ENCODE measurements at regions of chr19 and their contacts with region 1.

Region 1: DNA sequence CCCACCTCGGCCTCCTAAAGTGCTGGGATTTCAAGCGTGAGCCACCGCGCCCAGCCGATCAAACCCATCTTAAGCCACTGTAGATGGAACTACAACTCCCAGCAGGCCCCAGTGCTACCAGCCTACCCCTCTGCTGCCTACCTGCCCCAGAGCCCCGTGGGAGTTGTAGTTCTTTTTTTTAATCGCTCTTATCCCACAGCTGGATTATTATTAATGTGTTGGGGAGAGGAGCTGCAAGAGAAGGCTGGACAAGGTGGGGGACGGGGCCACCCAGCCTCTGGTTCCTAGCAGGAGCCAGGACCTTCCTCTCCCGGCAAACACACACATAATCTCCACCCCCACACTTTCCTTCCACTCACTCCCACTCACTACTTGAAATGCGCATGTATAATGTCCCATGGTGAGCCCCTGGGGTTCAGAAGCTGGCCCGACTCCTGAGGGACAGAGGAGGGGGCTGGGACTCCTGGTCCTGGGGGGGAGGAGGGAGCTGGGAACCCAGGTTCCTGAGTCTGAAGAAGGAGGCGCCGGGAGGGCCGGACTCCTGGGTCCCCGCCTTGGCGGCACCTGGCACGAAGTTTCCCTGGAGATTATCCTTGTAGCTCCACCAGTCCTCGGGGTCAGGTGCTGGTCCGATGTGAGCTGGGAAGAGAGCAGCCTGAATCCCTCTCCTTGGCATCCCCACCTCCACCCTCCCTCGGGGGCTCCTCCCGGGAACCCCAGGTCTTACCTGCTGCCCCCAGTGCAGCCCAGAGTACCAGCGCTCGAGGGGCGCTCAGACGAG is 958 bp downstream of the CA11 start:
- DNase-seq: peak in 1 of 2 donors; percentile 81
- H3K4me3 ChIP-seq: peak overlapping the region; percentile 50 to 68 (median 57)
- H3K27ac ChIP-seq: peak overlapping the region; percentile 87 to 93
- H3K4me1 ChIP-seq: peaks cover 0 to 4% of the 10 kb centered on the region in 2 donors
- H3K27me3 ChIP-seq: no peaks in the 10 kb centered on the region
- CTCF ChIP-seq: no peak
- POLR2A ChIP-seq: no peak

Region 2: DNA sequence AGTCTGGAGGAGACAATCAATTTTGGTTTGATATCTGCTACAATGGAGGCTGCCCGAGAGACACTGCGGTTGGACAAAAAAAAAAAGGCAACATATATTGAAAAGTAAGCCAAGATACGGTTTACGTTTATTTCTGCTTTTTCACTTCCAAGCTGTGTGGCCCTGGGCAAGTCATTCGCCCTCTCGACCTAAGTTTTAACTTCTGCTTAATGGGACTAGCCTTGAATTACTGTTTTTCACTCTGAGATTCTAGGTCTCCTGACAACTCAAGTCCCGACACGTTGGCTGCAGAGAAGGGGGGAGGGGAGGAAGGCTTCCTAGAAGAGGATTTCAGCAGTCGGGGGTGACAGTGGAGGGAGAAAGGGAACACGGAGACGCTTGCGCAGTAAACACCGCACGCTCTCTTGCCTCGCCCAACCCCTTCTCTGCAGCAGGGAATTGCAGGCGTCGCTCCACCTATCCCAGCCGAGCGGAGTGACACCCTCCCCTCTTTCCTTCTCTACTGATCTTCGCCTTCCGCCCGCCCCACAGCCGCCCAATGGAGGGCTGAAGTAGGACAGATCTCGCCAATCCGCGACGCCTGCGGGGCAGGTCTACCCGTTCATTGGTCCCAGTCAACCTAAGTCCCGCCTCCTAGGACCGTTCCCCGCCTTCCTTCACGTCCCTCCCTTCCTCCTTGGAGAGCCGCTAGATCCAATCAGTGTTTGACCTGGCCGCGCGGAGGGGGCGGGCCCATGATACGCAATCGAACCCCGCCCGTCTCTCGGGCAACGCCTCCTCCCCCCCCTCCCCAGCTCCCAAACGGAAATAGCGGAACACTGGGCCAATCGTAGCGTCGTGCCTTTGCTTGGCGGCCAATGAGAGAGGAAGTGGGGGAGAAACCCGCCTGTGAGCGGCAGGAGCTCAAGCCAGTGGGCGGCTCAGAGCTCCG is 1121.2 kb after region 1 on chr19:
- intact Hi-C with region 1: loop called (anchors 5 kb)
- DNase-seq: peak; percentile 100
- H3K4me3 ChIP-seq: peak overlapping the region; percentile 82 to 96 (median 93)
- H3K27ac ChIP-seq: peak overlapping the region; percentile 93 to 94
- H3K4me1 ChIP-seq: peaks cover 6 to 14% of the 10 kb centered on the region in 2 donors
- H3K27me3 ChIP-seq: no peaks in the 10 kb centered on the region
- CTCF ChIP-seq: peak in 2 of 3 donors; percentile 13 to 23
- POLR2A ChIP-seq: peak; percentile 61